Stomach (tissue), 19 donors: ENCODE measurements at regions of chr1 and their contacts with region 1.

Region 1: DNA sequence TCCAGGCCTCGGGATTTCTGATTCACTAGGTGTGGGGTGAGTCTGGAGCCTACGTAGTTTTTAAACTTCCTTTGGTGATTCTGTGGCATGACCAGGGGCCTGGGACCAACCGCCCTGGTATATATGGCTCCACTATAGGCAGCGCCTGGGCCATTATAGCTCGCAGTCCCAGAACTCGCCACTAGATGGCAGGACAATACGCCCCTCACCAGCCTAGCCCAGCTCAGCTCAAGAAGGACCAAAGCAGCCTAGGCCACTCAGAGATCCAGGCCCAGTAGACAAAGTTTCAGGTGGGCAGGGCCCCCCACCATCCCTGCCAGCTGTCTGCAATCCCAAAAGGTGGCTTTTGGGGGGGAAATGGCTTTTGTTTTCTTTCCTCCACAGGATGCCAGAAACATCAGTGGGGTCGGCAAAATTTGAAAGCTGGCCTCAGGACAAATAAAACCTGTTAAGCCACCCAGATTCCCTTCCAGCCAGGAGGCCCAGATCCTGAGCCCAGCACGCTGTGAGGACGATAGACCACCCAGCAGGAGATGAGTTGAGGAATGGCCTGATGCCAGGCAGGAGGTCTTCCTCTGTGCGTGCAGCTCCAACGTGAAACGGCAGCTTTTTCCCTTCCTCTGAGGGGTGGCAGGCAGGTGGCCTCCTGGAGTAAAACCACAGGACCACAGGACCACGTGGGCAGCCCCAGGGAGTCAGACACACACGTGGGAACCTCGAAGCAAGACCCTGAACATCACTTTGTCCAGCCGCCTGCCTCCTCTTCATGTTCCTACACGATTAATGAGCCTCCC is 24.8 kb upstream of the TMEM51 start:
- DNase-seq: peak; percentile 86 to 92
- H3K4me3 ChIP-seq: no peak overlapping the region
- H3K27ac ChIP-seq: peak overlapping the region in 1 of 5 donors; percentile 19
- H3K4me1 ChIP-seq: peaks cover 0 to 6% (median 0%) of the 10 kb centered on the region in 4 donors
- H3K27me3 ChIP-seq: no peaks in the 10 kb centered on the region
- CTCF ChIP-seq: peak in 5 of 7 experiments; percentile 85 to 93 (median 91)
- EP300 ChIP-seq: no peak
- POLR2A ChIP-seq: no peak

Region 2: GRCh38 chr1:14567056-14567455 is 561.7 kb before region 1 on chr1:
- intact Hi-C with region 1: no loop called
- DNase-seq: no peak
- H3K4me3 ChIP-seq: no peak overlapping the region
- H3K27ac ChIP-seq: no peak overlapping the region
- H3K4me1 ChIP-seq: no peaks in the 10 kb centered on the region
- H3K27me3 ChIP-seq: no peaks in the 10 kb centered on the region
- CTCF ChIP-seq: no peak
- EP300 ChIP-seq: no peak
- POLR2A ChIP-seq: no peak

Region 3: GRCh38 chr1:14996133-14997050 is 132.3 kb before region 1 on chr1:
- intact Hi-C with region 1: no loop called
- DNase-seq: no peak
- H3K4me3 ChIP-seq: no peak overlapping the region
- H3K27ac ChIP-seq: peak overlapping the region in 1 of 5 donors; percentile 42
- H3K4me1 ChIP-seq: peaks cover 0 to 13% (median 0%) of the 10 kb centered on the region in 4 donors
- H3K27me3 ChIP-seq: no peaks in the 10 kb centered on the region
- CTCF ChIP-seq: no peak
- EP300 ChIP-seq: no peak
- POLR2A ChIP-seq: no peak

Region 4: GRCh38 chr1:15304701-15305467 is 176.2 kb after region 1 on chr1:
- intact Hi-C with region 1: loop called (anchors 10 kb)
- DNase-seq: peak; percentile 76 to 85
- H3K4me3 ChIP-seq: no peak overlapping the region
- H3K27ac ChIP-seq: no peak overlapping the region
- H3K4me1 ChIP-seq: peaks cover 0 to 14% (median 7%) of the 10 kb centered on the region in 4 donors
- H3K27me3 ChIP-seq: no peaks in the 10 kb centered on the region
- CTCF ChIP-seq: peak in 6 of 7 experiments; percentile 9 to 97 (median 84)
- EP300 ChIP-seq: no peak
- POLR2A ChIP-seq: no peak